CD4-positive, alpha-beta T cell (primary cell): ENCODE measurements at regions of chr12 and their contacts with region 1.

Region 1: DNA sequence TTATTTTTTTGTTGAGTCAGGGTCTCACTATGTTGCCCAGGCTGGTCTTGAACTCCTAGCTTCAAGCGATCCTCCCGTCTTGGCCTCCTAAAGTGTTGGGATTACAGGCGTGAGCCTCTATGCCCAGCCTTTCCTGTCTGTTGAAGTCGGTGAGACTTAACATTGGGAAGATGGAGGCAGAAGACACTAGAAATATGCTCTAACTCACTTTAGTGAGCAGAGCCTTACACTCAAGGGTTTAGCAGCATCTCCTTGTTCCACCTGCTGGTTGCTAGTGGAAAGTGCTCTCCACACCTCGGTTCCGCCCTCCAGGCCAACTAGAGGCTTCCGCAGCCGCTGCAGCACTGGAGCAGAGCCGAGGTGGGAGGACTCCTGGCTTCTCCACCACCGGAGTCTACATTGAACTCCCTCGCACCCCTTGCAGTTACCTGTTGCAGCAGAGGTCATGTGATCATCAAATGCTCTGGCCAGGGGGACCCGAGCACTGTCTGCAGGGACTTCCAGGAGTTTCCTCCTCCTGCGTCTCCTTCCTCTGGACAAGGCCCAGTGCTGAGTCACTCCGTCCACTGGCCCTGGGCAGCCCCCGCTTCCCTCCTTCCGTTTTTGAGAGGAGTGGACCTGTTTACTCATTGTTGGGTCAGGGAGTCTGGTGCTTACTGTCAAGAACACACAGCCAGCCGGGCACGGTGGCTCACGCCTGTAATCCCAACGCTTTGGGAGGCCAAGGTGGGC is 9.4 kb upstream of the HVCN1 start:
- DNase-seq: peak; percentile 66 to 90 (median 73)
- ATAC-seq: peak; percentile 100
- H3K4me3 ChIP-seq: no peak overlapping the region
- H3K4me3 Mint-ChIP-seq: no peak overlapping the region
- H3K27ac ChIP-seq: no peak overlapping the region
- H3K27ac Mint-ChIP-seq: peak overlapping the region; percentile 21
- H3K4me1 ChIP-seq: peaks cover 10% of the 10 kb centered on the region
- H3K4me1 Mint-ChIP-seq: peaks cover 17% of the 10 kb centered on the region
- H3K27me3 ChIP-seq: no peaks in the 10 kb centered on the region
- H3K27me3 Mint-ChIP-seq: no peaks in the 10 kb centered on the region
- CTCF ChIP-seq: peak; percentile 86

Region 2: GRCh38 chr12:110513842-110514241 is 184.5 kb before region 1 on chr12:
- CTCF ChIA-PET with region 1: no interaction called
- POLR2A ChIA-PET with region 1: no interaction called
- intact Hi-C with region 1: loop called in 1 of 2 experiments (anchors 5 kb)
- DNase-seq: no peak
- ATAC-seq: no peak
- H3K4me3 ChIP-seq: no peak overlapping the region
- H3K4me3 Mint-ChIP-seq: no peak overlapping the region
- H3K27ac ChIP-seq: no peak overlapping the region
- H3K27ac Mint-ChIP-seq: no peak overlapping the region
- H3K4me1 ChIP-seq: no peaks in the 10 kb centered on the region
- H3K4me1 Mint-ChIP-seq: no peaks in the 10 kb centered on the region
- H3K27me3 ChIP-seq: no peaks in the 10 kb centered on the region
- H3K27me3 Mint-ChIP-seq: no peaks in the 10 kb centered on the region
- CTCF ChIP-seq: no peak

Region 3: DNA sequence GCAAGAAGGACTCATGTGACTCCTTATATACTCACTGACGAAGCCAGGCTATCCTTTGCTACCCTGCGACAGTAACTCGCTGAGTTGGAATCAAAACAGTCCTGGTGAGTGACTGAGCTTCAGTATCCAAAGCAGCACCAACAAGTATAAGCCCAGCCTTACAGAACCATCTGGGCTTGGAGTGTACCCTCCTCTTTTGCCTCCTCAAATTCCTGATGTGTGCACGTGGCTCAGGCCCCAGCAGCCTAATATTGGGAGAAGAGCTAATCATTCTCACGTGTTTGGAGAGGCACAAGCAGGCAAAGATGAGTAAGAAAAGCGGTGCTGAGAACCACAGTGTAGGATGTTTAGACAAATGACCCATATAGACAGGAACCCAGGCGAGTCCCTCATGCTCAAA is 149.7 kb before region 1 on chr12:
- CTCF ChIA-PET with region 1: no interaction called
- POLR2A ChIA-PET with region 1: no interaction called
- intact Hi-C with region 1: loop called (anchors 1 to 2 kb)
- DNase-seq: no peak
- ATAC-seq: no peak
- H3K4me3 ChIP-seq: no peak overlapping the region
- H3K4me3 Mint-ChIP-seq: no peak overlapping the region
- H3K27ac ChIP-seq: no peak overlapping the region
- H3K27ac Mint-ChIP-seq: no peak overlapping the region
- H3K4me1 ChIP-seq: peaks cover 7% of the 10 kb centered on the region
- H3K4me1 Mint-ChIP-seq: peaks cover 39% of the 10 kb centered on the region
- H3K27me3 ChIP-seq: no peaks in the 10 kb centered on the region
- H3K27me3 Mint-ChIP-seq: no peaks in the 10 kb centered on the region
- CTCF ChIP-seq: no peak

Region 4: GRCh38 chr12:110555577-110556406 is 142.5 kb before region 1 on chr12:
- CTCF ChIA-PET with region 1: no interaction called
- POLR2A ChIA-PET with region 1: no interaction called
- intact Hi-C with region 1: loop called (anchors 1 to 2 kb)
- DNase-seq: no peak
- ATAC-seq: no peak
- H3K4me3 ChIP-seq: no peak overlapping the region
- H3K4me3 Mint-ChIP-seq: no peak overlapping the region
- H3K27ac ChIP-seq: no peak overlapping the region
- H3K27ac Mint-ChIP-seq: peak overlapping the region; percentile 25
- H3K4me1 ChIP-seq: peaks cover 35% of the 10 kb centered on the region
- H3K4me1 Mint-ChIP-seq: peaks cover 60% of the 10 kb centered on the region
- H3K27me3 ChIP-seq: no peaks in the 10 kb centered on the region
- H3K27me3 Mint-ChIP-seq: no peaks in the 10 kb centered on the region
- CTCF ChIP-seq: no peak

Region 5: DNA sequence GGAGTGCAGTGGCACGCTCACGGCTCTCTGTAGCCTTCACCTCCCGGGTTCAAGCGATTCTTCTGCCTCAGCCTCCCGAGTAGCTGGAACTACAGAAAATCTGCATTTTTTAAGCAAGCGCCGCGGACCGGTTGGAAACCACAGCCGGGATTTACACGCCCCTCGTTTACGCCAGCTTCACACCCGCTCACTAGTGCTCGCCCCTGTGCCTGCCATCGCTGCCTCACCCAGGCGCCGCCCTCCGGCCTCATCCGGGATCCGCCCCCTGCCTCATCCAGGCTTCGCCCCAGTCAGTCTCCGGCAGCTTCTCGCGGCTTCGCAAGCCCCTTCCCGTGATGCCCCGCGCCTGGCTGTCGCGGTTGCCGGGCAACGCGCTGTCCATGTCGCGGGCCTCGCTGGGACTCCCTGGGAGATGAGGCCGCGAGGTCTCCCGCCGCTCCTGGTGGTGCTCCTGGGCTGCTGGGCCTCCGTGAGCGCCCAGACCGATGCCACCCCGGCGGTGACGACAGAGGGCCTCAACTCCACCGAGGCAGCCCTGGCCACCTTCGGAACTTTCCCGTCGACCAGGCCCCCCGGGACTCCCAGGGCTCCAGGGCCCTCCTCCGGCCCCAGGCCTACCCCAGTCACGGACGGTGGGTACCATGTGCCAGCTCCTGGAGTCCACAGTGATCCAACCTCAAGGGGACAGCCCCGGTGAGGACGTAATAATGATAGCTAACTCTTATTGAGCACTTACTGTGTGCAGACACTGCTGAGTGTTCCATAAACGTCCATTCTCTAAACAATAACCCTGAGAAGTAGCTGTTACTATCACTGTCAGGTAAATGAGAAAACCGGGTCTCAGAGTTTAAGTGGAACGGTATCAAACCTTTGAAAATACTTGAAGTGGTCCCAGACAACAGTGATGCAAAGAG is 84.3 kb before region 1 on chr12 and contains the start of gene TCTN1:
- CTCF ChIA-PET with region 1: no interaction called
- POLR2A ChIA-PET with region 1: interaction called, 3 read pairs
- intact Hi-C with region 1: loop called (anchors 2 kb)
- DNase-seq: peak; percentile 91 to 98 (median 96)
- ATAC-seq: peak; percentile 99
- H3K4me3 ChIP-seq: peak within 1 kb of the TSS; percentile 73
- H3K4me3 Mint-ChIP-seq: peak within 1 kb of the TSS; percentile 89
- H3K27ac ChIP-seq: peak within 1 kb of the TSS; percentile 61 to 68
- H3K27ac Mint-ChIP-seq: peak within 1 kb of the TSS; percentile 83
- H3K4me1 ChIP-seq: peaks cover 17% of the 10 kb centered on the region
- H3K4me1 Mint-ChIP-seq: peaks cover 4% of the 10 kb centered on the region
- H3K27me3 ChIP-seq: no peaks in the 10 kb centered on the region
- H3K27me3 Mint-ChIP-seq: no peaks in the 10 kb centered on the region
- CTCF ChIP-seq: no peak
- total RNA-seq, gene TCTN1: 5.0 to 5.5 TPM

Region 6: DNA sequence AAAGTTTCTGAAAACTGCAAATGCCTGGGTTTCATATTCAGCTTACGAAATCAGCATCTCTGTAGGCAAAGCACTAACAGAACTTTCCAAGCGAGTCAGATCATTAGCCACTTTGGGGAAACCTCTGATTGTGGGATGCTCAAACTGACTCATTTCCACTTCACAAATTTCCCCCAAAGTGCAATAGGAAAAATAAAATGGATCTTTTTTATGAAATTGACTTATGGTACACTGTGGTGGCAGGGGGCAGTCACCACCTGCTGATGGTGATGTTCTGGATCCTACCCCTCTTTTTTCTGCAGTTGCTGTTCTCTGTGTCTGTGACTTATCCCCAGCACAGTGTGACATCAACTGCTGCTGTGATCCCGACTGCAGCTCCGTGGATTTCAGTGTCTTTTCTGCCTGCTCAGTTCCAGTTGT is 78.8 kb before region 1 on chr12:
- CTCF ChIA-PET with region 1: no interaction called
- POLR2A ChIA-PET with region 1: no interaction called
- intact Hi-C with region 1: loop called (anchors 2 kb)
- DNase-seq: peak in 2 of 14 experiments; percentile 37 to 44
- ATAC-seq: peak; percentile 34
- H3K4me3 ChIP-seq: no peak overlapping the region
- H3K4me3 Mint-ChIP-seq: no peak overlapping the region
- H3K27ac ChIP-seq: no peak overlapping the region
- H3K27ac Mint-ChIP-seq: no peak overlapping the region
- H3K4me1 ChIP-seq: peaks cover 3% of the 10 kb centered on the region
- H3K4me1 Mint-ChIP-seq: peaks cover under 1% of the 10 kb centered on the region
- H3K27me3 ChIP-seq: no peaks in the 10 kb centered on the region
- H3K27me3 Mint-ChIP-seq: no peaks in the 10 kb centered on the region
- CTCF ChIP-seq: no peak

Region 7: GRCh38 chr12:110790301-110790700 is 92.0 kb after region 1 on chr12:
- CTCF ChIA-PET with region 1: no interaction called
- POLR2A ChIA-PET with region 1: no interaction called
- intact Hi-C with region 1: no loop called
- DNase-seq: no peak
- ATAC-seq: no peak
- H3K4me3 ChIP-seq: no peak overlapping the region
- H3K4me3 Mint-ChIP-seq: no peak overlapping the region
- H3K27ac ChIP-seq: no peak overlapping the region
- H3K27ac Mint-ChIP-seq: no peak overlapping the region
- H3K4me1 ChIP-seq: no peaks in the 10 kb centered on the region
- H3K4me1 Mint-ChIP-seq: no peaks in the 10 kb centered on the region
- H3K27me3 ChIP-seq: no peaks in the 10 kb centered on the region
- H3K27me3 Mint-ChIP-seq: no peaks in the 10 kb centered on the region
- CTCF ChIP-seq: no peak